T-cell (primary cell): ENCODE measurements at regions of chr1 and their contacts with region 1.

Region 1: DNA sequence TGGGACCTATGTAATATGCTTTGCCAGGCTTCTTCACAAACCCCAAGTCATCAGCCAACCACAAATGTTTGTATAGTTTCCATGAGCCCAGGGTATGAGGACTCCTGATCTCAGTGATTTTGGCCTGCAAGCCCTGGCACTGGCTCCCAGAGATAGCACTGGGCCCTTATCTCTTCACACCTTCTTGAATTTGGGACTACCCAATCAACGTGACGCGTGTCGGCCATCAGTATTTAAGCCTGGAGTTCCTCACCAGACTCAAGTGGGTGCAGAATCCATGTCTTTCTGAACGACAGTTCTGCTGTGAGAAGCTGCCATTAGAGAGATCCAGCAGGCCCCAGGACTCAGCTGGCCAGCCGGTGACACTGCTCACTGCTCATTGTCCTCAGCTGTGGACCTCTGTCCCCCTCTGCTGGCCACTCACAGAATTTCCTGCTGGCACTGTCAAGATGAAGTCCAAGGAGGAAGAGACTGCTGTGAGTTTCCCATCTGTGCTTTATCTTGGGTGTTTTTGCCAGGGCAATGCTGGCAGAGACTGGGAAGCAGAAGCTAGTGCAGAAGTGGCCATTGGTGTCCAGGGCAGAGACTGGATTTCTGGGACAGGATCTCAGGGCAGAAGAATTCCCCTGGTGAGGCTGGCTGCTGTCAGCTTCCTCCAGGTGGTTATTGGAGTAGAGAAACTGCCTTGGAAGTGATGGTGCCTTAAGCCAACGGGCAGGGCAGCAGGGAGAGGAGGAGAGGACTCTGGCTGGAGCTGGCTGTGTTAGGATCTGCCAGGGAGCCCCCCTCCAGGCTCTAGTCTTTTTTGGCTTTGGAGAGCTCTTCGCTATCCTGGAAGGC is 28.4 kb downstream of the TMCC2 start:
- DNase-seq: peak; percentile 46 to 88 (median 76)
- ATAC-seq: peak; percentile 89 to 98 (median 94)
- H3K4me3 ChIP-seq: no peak overlapping the region
- H3K4me3 Mint-ChIP-seq: no peak overlapping the region
- H3K27ac ChIP-seq: no peak overlapping the region
- H3K27ac Mint-ChIP-seq: no peak overlapping the region
- H3K4me1 ChIP-seq: peaks cover 0 to 5% of the 10 kb centered on the region in 2 experiments
- H3K4me1 Mint-ChIP-seq: peaks cover 0 to 4% (median 0%) of the 10 kb centered on the region in 3 donors
- H3K27me3 ChIP-seq: peaks cover 0 to 17% of the 10 kb centered on the region in 2 experiments
- H3K27me3 Mint-ChIP-seq: peaks cover 0 to 3% of the 10 kb centered on the region in 2 donors

Region 2: DNA sequence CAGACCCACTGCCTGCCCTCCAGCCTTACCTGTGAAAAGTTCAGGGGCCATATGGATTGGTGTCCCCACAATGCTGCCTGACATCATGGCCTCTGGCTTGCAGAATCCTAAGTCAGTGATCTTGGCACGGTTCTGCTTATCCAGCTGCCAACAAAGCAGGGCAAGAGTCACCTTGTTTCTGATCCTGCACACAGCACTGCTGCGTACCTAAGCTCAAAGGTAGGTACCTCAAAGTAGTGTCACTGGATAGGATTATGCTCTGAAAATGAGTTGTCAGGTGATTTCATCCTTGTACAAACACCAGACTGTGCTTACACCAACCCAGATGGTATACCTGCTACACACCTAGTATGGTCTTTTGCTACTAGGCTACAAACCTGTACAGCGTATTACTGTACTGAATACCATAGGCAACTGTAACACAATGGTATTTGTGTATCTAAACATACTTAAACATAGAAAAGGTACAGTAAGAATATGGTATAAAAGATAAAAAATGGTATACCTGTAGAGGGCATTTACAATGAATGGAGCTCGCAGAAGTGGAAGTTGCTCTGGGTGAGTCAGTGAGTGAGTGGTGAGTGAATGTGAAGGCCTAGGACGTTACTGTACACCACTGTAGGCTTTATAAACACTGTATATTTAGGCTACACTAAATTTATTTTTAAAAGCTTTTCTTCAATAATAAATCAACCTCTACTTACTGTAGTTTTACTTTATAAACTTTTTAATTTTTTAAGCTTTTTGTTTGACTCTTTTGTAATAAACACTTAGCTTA is 105.3 kb before region 1 on chr1:
- CTCF ChIA-PET with region 1: no interaction called
- POLR2A ChIA-PET with region 1: interaction called in 1 of 2 experiments, 18 read pairs
- DNase-seq: no peak
- ATAC-seq: no peak
- H3K4me3 ChIP-seq: no peak overlapping the region
- H3K4me3 Mint-ChIP-seq: no peak overlapping the region
- H3K27ac ChIP-seq: no peak overlapping the region
- H3K27ac Mint-ChIP-seq: no peak overlapping the region
- H3K4me1 ChIP-seq: no peaks in the 10 kb centered on the region
- H3K4me1 Mint-ChIP-seq: no peaks in the 10 kb centered on the region
- H3K27me3 ChIP-seq: no peaks in the 10 kb centered on the region
- H3K27me3 Mint-ChIP-seq: no peaks in the 10 kb centered on the region

Region 3: GRCh38 chr1:205227584-205228006 is 28.6 kb before region 1 on chr1 and contains the start of gene TMCC2:
- CTCF ChIA-PET with region 1: interaction called, 30 to 47 read pairs
- POLR2A ChIA-PET with region 1: interaction called in 1 of 2 experiments, 3 read pairs
- DNase-seq: peak; percentile 50 to 85 (median 69)
- ATAC-seq: peak; percentile 82 to 87 (median 86)
- H3K4me3 ChIP-seq: peak within 1 kb of the TSS; percentile 59 to 80
- H3K4me3 Mint-ChIP-seq: peak within 1 kb of the TSS; percentile 85 to 91 (median 87)
- H3K27ac ChIP-seq: no peak within 1 kb of the TSS
- H3K27ac Mint-ChIP-seq: peak within 1 kb of the TSS; percentile 80 to 84
- H3K4me1 ChIP-seq: peaks cover 14 to 26% of the 10 kb centered on the region in 2 experiments
- H3K4me1 Mint-ChIP-seq: peaks cover 18 to 30% (median 25%) of the 10 kb centered on the region in 3 donors
- H3K27me3 ChIP-seq: peaks cover 2 to 24% of the 10 kb centered on the region in 2 experiments
- H3K27me3 Mint-ChIP-seq: peaks cover 3 to 10% of the 10 kb centered on the region in 2 donors
- total RNA-seq, gene TMCC2: 1.0 to 3.3 (median 1.8) TPM